GM12878 (cell line): ENCODE measurements at regions of chr17 and their contacts with region 1.

Region 1: DNA sequence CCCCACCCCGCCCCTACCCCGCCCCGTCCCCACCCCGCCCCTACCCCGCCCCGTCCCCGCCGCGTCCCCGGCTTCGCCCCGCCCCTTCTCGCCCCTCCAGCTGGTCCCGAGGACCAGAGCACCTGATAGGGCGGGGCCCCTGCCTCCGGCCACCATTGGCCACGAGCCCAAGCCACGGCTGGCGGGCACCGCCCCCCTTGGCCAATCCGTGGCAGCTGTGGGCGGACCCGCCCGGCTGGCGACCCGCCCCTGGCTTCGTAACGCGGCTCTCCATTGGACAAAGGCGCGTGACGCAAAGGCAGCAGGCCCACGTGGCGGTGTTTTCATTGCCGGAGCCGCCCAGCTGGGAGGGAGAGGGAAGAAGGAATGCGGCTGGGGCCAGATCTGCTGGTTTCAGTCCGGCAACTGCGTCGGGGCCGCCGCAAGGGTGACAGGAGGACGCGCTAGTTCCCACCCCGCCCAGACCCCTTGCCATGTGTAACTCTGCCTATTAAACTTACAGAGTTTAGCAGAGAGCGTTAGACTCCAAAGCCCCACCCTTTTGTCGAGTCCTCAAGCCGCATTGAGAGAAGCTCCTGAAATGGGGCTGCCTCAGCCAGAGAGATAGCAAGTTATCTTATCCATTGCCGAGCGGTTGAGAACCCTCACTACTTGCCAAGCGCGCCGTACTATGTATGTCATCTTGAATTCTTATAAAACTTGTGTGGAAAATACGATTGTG is 403 bp upstream of the WIPI1 start:
- DNase-seq: peak; percentile 91
- ATAC-seq: peak; percentile 83
- H3K4me3 ChIP-seq: peak overlapping the region; percentile 67
- H3K27ac ChIP-seq: peak overlapping the region; percentile 78
- H3K4me1 ChIP-seq: peaks cover 37% of the 10 kb centered on the region
- H3K27me3 ChIP-seq: no peaks in the 10 kb centered on the region
- CTCF ChIP-seq: no peak
- EP300 ChIP-seq: no peak
- POLR2A ChIP-seq: peak; percentile 89
- RAD21 ChIP-seq: no peak

Region 2: DNA sequence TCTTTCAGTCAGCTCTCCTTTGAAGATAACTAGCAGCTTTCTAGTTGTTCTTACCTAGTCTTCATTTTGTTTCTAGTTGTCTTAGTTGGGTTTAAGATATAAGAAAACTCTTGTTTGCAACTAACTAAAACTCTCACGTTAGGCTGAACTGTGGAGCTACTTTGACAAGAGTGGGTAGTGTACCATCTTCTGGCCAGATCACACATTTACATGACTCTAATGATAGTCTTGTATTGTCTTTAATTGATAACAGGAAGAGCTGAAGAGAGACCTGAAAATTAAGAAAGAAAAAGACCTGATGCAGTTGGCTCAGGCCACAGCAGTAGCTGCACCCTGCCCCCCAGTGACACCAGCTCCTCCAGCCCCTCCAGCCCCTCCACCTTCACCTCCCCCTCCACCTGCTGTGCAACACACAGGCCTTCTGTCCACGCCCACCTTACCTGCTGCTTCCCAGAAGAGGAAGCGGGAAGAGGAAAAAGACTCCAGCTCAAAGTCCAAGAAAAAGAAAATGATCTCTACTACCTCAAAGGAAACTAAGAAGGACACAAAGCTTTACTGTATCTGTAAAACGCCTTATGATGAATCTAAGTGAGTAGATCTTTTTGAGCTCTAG is 498.3 kb before region 1 on chr17:
- CTCF ChIA-PET with region 1: interaction called, 3 read pairs
- POLR2A ChIA-PET with region 1: no interaction called
- RAD21 ChIA-PET with region 1: no interaction called
- SMC1A ChIA-PET with region 1: interaction called, 3 read pairs
- in situ Hi-C with region 1: loop called (anchors 10 kb)
- intact Hi-C with region 1: loop called (anchors 10 kb)
- DNase-seq: no peak
- ATAC-seq: no peak
- H3K4me3 ChIP-seq: no peak overlapping the region
- H3K27ac ChIP-seq: no peak overlapping the region
- H3K4me1 ChIP-seq: no peaks in the 10 kb centered on the region
- H3K27me3 ChIP-seq: no peaks in the 10 kb centered on the region
- CTCF ChIP-seq: no peak
- EP300 ChIP-seq: no peak
- POLR2A ChIP-seq: no peak
- RAD21 ChIP-seq: no peak

Region 3: DNA sequence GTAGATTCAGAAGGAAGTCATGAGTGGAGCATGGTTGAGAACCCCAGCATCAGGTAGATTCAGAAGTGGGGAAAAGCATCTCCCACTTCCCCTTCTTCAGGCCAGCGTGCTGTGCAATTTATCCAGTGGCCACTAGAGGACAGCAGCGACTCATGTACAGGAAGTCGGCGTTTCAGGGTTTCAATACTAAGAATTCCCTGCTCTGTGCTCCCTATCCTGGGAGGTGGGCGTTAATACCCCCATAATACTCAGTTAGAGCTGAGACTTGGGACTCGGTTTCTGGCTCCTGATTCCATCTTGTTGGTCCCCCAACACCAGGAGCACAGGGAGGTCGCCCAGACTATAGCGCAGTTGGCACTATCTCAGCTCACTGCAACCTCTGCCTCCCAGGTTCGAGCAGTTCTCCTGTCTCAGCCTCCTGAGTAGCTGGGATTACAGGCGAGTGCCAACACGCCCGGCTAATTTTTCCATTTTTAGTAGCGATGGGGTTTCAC is 285.2 kb before region 1 on chr17:
- CTCF ChIA-PET with region 1: interaction called, 9 read pairs
- POLR2A ChIA-PET with region 1: no interaction called
- RAD21 ChIA-PET with region 1: interaction called, 14 read pairs
- SMC1A ChIA-PET with region 1: interaction called, 9 read pairs
- in situ Hi-C with region 1: no loop called
- intact Hi-C with region 1: loop called (anchors 2 kb)
- DNase-seq: no peak
- ATAC-seq: peak; percentile 90
- H3K4me3 ChIP-seq: no peak overlapping the region
- H3K27ac ChIP-seq: no peak overlapping the region
- H3K4me1 ChIP-seq: no peaks in the 10 kb centered on the region; the same call in 1 of the 2 replicates
- H3K27me3 ChIP-seq: no peaks in the 10 kb centered on the region
- CTCF ChIP-seq: peak; percentile 78 to 99 (median 96)
- EP300 ChIP-seq: no peak
- POLR2A ChIP-seq: no peak
- RAD21 ChIP-seq: peak; percentile 94

Region 4: DNA sequence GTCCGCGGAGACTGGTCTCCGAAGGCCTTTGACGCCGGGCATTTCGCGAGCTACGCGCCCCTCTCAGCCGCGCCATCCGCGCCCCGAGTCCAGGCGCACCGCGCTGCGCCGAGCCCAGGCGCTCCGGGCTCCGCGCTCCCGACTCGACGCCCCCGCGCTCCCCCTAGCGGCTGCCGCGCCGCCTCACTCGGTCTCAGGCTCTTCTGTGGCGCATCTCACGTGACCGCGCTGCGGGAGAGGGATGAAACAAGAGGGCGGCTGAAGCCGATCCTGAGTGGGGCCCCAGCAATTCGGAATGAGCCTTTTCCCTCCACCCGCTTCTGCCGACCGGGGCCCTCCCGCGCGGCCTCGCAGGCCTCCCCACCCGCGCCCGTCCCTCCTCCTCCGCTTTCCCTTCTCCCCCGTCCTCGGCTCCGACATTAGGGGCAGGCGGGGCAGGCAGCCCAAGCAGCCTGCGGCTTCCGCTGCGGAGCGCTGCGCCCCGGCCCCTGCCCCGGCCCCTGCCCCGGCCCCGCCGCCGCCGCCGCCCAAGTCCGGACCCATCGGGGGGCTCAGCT is 252.4 kb before region 1 on chr17:
- CTCF ChIA-PET with region 1: interaction called, 9 read pairs
- POLR2A ChIA-PET with region 1: interaction called, 3 read pairs
- RAD21 ChIA-PET with region 1: interaction called, 8 read pairs
- SMC1A ChIA-PET with region 1: interaction called, 17 read pairs
- in situ Hi-C with region 1: no loop called
- intact Hi-C with region 1: loop called (anchors 5 kb)
- DNase-seq: no peak
- ATAC-seq: peak; percentile 92
- H3K4me3 ChIP-seq: peak overlapping the region; percentile 90
- H3K27ac ChIP-seq: peak overlapping the region; percentile 79
- H3K4me1 ChIP-seq: peaks cover 8% of the 10 kb centered on the region
- H3K27me3 ChIP-seq: 0 out of 4 replicates have a peak, but pooled peaks cover 2 to 4% of the 10 kb centered on the region in 2 experiments
- CTCF ChIP-seq: peak; percentile 85 to 96 (median 92)
- EP300 ChIP-seq: no peak
- POLR2A ChIP-seq: peak; percentile 79
- RAD21 ChIP-seq: peak; percentile 55

Region 5: DNA sequence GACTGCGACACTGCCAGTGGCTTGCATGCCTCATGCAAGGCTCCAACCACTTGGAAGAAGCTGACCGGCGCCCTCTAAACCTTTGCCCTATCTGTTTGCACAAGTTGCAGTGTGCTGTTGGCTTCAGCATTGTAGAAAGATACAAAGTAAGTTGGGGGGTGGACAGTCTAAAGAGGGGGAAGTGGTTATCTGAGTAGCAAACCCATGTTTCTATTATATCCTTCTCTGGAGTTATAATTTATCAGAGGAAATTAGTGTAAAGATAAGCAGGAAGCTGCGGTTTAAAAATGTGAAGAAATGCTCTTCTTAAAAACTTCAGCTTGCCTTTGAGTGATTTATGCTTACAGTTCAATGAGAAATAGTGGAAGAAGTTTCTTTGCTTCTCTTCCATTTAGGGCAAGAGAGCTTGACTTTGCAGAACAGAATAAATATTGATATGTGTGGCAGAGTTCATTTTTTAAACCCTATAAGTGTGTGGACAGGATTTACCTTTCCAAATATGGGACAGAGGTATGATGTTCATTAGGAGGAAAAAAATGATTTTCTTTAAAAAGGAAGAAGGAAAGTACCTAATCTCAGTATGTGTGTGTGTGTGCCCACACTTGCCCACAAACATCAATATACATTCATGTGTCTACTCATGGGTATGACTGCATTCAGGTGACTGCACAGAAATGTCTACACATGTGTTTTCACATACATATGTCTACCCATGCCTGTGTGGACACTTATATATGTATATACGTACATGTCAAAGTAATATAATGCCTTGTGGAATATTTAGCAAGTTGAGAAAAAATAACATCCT is 201.8 kb before region 1 on chr17:
- CTCF ChIA-PET with region 1: interaction called, 119 read pairs
- POLR2A ChIA-PET with region 1: interaction called, 4 read pairs
- RAD21 ChIA-PET with region 1: interaction called, 8 read pairs
- SMC1A ChIA-PET with region 1: interaction called, 163 read pairs
- in situ Hi-C with region 1: loop called (anchors 5 kb)
- intact Hi-C with region 1: no loop called
- DNase-seq: no peak
- ATAC-seq: peak; percentile 57
- H3K4me3 ChIP-seq: no peak overlapping the region
- H3K27ac ChIP-seq: no peak overlapping the region
- H3K4me1 ChIP-seq: peaks cover 7% of the 10 kb centered on the region; the same call in 1 of the 2 replicates
- H3K27me3 ChIP-seq: no peaks in the 10 kb centered on the region
- CTCF ChIP-seq: no peak
- EP300 ChIP-seq: no peak
- POLR2A ChIP-seq: no peak
- RAD21 ChIP-seq: no peak

Region 6: GRCh38 chr17:68435876-68436842 is 21.5 kb before region 1 on chr17:
- CTCF ChIA-PET with region 1: interaction called, 222 read pairs
- POLR2A ChIA-PET with region 1: interaction called, 23 read pairs
- RAD21 ChIA-PET with region 1: interaction called, 157 read pairs
- SMC1A ChIA-PET with region 1: interaction called, 288 read pairs
- in situ Hi-C with region 1: no loop called
- intact Hi-C with region 1: no loop called
- DNase-seq: no peak
- ATAC-seq: peak; percentile 83
- H3K4me3 ChIP-seq: no peak overlapping the region
- H3K27ac ChIP-seq: no peak overlapping the region
- H3K4me1 ChIP-seq: peaks cover 33% of the 10 kb centered on the region
- H3K27me3 ChIP-seq: no peaks in the 10 kb centered on the region
- CTCF ChIP-seq: peak; percentile 90 to 97 (median 96)
- EP300 ChIP-seq: no peak
- POLR2A ChIP-seq: no peak
- RAD21 ChIP-seq: peak; percentile 82